Right cardiac atrium (tissue), 5 donors: ENCODE measurements at regions of chr4 and their contacts with region 1.

Region 1: GRCh38 chr4:123649645-123650391 is 253.2 kb downstream of the SPRY1 start:
- DNase-seq: peak; percentile 28 to 61 (median 61)
- ATAC-seq: peak; percentile 76 to 78
- H3K4me3 ChIP-seq: peak overlapping the region; percentile 45
- H3K27ac ChIP-seq: peak overlapping the region; percentile 88
- H3K4me1 ChIP-seq: peaks cover 4% of the 10 kb centered on the region
- H3K27me3 ChIP-seq: no peaks in the 10 kb centered on the region

Region 2: DNA sequence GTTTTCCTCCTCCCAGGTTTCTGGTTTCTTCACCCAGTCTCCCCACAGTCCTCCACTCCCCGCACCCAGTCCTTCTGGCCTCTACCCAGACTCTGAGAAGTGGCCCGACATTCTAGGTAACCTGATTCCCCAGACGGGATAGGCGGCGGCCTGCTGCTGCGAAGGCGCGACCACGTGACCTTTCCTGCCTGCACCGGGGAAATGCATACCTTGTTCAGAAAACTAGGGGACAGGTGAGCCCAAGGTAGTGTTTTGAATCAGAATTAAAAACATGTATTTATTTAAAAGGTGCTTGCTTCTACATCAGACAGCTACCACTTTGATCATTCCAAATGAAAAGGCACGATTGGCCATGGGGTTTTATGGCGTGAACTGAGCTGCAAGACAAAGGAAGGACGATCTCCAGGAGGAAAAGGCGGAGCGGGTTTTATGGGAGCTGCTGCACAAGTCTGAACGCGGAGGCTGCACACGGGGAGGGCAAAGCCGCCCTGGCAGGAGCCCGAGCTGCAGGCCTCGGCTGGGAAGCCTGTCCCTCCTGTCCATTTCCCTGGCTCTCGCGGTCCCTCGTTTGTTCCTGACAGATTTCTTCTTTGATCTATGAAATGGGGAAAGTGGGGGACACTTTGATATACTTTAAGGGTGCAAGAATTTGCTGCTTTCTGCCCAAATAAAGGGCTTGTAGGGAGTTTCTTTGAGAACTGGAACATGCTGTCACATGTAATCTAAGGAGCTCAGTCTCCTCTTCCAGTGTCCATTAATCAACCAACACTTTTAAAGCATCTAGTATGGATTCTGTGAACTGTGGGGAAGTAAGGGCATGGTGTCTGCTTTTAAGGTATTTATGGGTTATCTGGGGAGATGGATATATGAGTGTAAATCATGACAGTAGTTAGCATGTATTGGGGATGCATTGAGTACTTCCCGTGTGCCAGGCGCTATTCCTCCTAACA is 102.3 kb before region 1 on chr4:
- intact Hi-C with region 1: no loop called
- DNase-seq: peak in 1 of 3 donors; percentile 32
- ATAC-seq: no peak
- H3K4me3 ChIP-seq: no peak overlapping the region
- H3K27ac ChIP-seq: no peak overlapping the region
- H3K4me1 ChIP-seq: no peaks in the 10 kb centered on the region
- H3K27me3 ChIP-seq: no peaks in the 10 kb centered on the region

Region 3: GRCh38 chr4:123573866-123574508 is 75.8 kb before region 1 on chr4:
- intact Hi-C with region 1: loop called in 1 of 4 experiments (anchors 10 kb)
- DNase-seq: no peak
- ATAC-seq: no peak
- H3K4me3 ChIP-seq: no peak overlapping the region
- H3K27ac ChIP-seq: no peak overlapping the region
- H3K4me1 ChIP-seq: no peaks in the 10 kb centered on the region
- H3K27me3 ChIP-seq: no peaks in the 10 kb centered on the region